Aorta (tissue), 5 donors: ENCODE measurements at regions of chr7 and their contacts with region 1.

Region 1: DNA sequence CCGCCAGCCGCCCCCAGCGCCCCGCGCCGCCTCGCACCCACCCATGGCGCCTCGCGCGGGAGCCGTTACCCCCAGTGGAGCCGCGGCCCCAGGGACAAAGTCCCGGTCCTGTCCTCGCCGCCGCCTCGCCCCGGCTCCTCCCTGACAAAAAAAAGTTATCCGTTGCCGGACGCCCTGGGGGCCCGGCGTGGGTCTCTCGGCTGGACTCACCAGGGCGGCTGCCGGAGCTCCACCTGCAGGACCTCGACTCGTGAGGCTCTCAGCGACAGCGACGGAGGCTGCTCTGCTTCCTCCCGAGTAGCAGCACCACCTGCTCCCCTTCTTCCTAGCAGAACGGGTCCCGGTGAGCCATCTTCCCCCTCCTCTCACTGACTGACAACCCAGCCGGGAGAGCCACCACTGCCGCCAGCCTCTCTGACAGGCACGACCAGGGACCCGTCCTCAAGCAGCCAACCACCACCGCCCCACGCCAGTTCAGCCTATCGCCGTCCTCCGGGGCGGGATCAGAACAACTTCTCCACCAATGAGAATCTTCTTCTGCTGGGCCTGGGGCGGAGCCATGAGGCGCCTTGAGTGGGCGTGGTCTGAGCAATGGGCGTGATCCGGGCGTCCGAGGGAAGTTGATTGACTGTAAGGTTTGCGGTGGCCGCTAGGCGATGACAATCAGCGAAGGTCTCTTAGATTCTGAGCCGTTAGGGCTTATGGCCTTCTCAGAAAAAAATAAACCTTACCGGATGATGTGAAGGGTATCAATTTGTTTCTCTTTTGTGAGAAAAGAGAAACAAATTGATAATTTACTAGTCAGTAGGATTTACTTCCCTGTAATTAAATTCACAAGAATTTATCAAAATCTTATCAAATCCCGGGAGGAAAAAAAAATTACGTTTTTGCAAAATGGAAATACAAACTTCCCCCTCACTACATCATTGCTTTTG is at the start of gene HYCC1:
- DNase-seq: peak; percentile 99
- ATAC-seq: peak; percentile 99
- H3K4me3 ChIP-seq: peak within 1 kb of the TSS; percentile 96 to 99
- H3K27ac ChIP-seq: peak within 1 kb of the TSS; percentile 11 to 68
- H3K4me1 ChIP-seq: peaks cover 8 to 21% of the 10 kb centered on the region in 2 donors
- H3K27me3 ChIP-seq: no peaks in the 10 kb centered on the region
- total RNA-seq, gene HYCC1: 61.1 to 69.3 TPM

Region 2: DNA sequence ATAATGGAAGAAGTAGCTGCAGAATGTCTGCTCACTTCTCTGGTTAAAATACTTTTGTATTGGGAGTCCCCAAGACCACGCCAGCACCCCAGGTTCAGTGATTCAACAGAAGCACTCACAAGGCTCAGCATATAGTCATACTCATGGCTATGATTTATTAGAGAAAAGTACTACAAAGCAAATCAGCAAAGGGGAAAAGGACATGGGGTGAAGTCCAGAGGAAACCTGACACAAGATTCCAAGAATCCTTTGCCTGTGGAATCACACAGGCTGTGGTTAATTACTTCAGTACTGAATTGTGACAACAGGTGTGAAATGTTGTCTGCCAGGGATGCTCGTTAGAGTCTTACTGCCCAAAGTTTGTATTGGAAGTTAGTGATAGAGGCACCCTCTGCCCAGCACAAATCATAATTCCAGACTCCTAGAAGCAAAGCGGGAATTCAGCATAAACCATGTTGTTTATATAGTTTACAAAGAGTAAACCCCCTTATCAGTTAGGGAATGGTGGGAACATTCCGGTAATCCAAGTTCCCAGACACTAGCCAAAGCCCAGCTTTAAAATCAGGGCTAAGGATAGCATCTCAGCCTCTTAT is 79.4 kb before region 1 on chr7:
- intact Hi-C with region 1: loop called in 1 of 2 experiments (anchors 5 kb)
- DNase-seq: no peak
- ATAC-seq: peak; percentile 53
- H3K4me3 ChIP-seq: no peak overlapping the region
- H3K27ac ChIP-seq: peak overlapping the region; percentile 40 to 82
- H3K4me1 ChIP-seq: peaks cover 0 to 7% of the 10 kb centered on the region in 2 donors
- H3K27me3 ChIP-seq: no peaks in the 10 kb centered on the region

Region 3: GRCh38 chr7:23055582-23056178 is 41.7 kb after region 1 on chr7:
- intact Hi-C with region 1: no loop called
- DNase-seq: no peak
- ATAC-seq: peak; percentile 74
- H3K4me3 ChIP-seq: no peak overlapping the region
- H3K27ac ChIP-seq: no peak overlapping the region
- H3K4me1 ChIP-seq: no peaks in the 10 kb centered on the region
- H3K27me3 ChIP-seq: no peaks in the 10 kb centered on the region